ENCODE measurements at regions of chr5 and their contacts with region 1.

Region 1: DNA sequence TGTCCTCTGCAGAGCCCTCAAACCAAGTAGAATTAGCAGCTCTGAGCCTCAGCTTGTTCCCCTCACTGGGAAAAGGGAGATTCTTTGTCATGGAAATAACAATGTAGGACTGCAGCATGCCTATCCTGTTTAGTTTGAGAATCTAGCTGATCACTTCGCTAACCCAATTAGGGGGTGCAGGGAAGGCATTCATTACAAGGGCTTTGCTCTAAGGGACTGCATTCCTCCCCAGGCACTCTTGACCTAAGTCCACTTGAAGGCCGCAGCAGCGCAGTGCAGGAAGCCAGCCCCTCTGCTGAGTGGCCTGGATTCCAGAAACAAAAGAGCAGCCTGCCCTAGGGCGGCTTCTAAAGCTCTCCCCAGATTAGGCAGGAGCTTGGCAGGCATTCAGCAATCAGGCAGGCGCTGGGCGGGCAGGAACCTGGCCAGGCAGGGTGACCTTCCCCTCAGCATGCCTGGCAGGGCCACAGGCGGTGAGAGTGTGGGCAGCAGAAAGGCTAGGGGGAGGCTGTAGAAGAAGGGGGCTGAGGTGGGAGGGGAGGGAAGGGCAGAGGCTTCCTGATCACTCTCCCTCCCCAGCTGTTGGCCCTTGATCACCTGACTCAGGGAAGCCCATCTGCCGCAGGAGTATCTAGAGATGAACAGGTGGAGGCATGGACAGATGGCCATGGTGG is 24.8 kb downstream of the CCNJL start:
- DNase-seq: peak; percentile 84 to 94
- H3K4me3 ChIP-seq: no peak overlapping the region
- H3K27ac ChIP-seq: peak overlapping the region; percentile 38
- H3K4me1 ChIP-seq: peaks cover 28% of the 10 kb centered on the region
- H3K27me3 ChIP-seq: no peaks in the 10 kb centered on the region
- CTCF ChIP-seq: no peak

Region 2: DNA sequence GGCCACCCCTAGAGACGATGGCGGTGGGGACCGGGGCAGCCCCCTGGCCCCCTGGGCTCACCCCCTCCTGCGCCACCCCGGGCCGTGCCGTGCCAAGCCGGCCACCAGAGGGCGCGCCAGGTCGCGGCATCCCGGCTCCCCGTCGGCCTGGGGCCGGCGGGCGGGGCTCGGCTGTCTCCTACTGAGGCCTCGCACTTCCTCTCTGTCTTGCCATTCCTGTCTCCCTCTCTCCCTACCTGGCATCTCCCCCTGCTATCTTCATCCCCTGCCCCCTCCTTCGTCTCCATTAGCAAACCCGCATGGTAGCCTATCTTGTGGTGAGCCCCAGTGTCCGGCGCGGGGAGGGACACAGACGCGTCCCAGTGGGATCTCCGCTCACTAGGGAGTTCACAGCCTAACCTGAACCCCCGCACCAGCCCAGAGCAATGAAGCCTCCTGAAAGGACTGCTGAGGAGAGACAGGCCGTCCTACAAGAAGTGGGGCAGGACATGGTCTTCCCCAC is 88.1 kb before region 1 on chr5:
- CTCF ChIA-PET with region 1: no interaction called
- POLR2A ChIA-PET with region 1: no interaction called
- intact Hi-C with region 1: loop called (anchors 2 kb)
- DNase-seq: peak in 1 of 2 experiments; percentile 84
- H3K4me3 ChIP-seq: peak overlapping the region; percentile 35; the same call in 1 of the 2 replicates
- H3K27ac ChIP-seq: no peak overlapping the region
- H3K4me1 ChIP-seq: no peaks in the 10 kb centered on the region
- H3K27me3 ChIP-seq: no peaks in the 10 kb centered on the region
- CTCF ChIP-seq: peak; percentile 85

Region 3: DNA sequence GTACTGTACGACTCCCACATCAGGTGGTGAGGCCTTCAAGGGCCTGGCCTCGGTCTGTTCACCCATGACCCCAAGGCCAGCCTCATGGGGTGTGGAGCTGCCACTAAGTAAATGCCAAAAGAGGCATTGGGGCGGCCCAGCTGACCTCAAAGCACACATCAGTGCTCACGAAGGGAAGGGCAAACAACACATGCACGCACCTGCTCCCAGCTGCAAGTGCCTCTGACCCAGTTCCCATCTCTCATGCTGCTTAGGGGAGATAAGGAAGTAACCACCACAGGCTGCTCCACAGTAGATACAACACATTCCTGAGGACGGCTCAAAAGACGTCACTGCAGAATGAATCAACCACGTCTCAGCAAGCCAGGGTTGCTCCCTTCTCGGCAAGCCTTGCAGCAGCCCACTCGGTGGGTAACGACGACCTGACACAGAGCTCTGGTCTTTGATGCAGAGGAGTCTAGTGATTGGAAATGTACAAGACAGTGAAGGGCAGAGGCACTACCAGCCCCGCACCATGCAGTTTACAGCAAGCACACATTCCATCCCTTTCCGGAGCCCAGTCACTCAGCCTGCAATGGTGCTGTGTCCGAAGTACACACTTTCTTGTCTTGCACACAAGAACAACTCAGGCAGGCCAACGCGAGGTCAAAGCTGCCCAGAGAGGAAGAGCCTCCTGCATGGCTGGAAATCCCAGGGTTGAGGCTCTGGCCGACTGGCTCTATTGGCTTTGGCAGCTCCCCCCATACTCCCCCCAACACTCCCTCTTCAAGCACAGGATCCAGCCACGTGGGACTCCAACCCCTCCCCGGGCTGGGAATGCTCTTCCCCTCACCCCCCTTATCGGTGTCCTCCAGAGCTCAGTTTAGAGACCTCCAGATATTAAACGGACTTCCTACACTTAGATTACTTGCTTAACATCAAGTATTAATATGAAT is 26.4 kb before region 1 on chr5:
- CTCF ChIA-PET with region 1: no interaction called
- POLR2A ChIA-PET with region 1: no interaction called
- intact Hi-C with region 1: loop called (anchors 1 kb)
- DNase-seq: peak; percentile 84 to 99
- H3K4me3 ChIP-seq: no peak overlapping the region
- H3K27ac ChIP-seq: peak overlapping the region; percentile 79
- H3K4me1 ChIP-seq: peaks cover 18% of the 10 kb centered on the region
- H3K27me3 ChIP-seq: no peaks in the 10 kb centered on the region
- CTCF ChIP-seq: no peak

Region 4: GRCh38 chr5:160269017-160269416 is 18.5 kb before region 1 on chr5:
- CTCF ChIA-PET with region 1: interaction called, 5 read pairs
- POLR2A ChIA-PET with region 1: no interaction called
- intact Hi-C with region 1: loop called (anchors 2 kb)
- DNase-seq: peak; percentile 52 to 64
- H3K4me3 ChIP-seq: no peak overlapping the region
- H3K27ac ChIP-seq: no peak overlapping the region
- H3K4me1 ChIP-seq: peaks cover 11% of the 10 kb centered on the region
- H3K27me3 ChIP-seq: no peaks in the 10 kb centered on the region
- CTCF ChIP-seq: no peak

Region 5: GRCh38 chr5:160303690-160304089 is 16.2 kb after region 1 on chr5:
- CTCF ChIA-PET with region 1: interaction called, 3 read pairs
- POLR2A ChIA-PET with region 1: no interaction called
- intact Hi-C with region 1: loop called (anchors 1 kb)
- DNase-seq: no peak
- H3K4me3 ChIP-seq: no peak overlapping the region
- H3K27ac ChIP-seq: no peak overlapping the region
- H3K4me1 ChIP-seq: no peaks in the 10 kb centered on the region
- H3K27me3 ChIP-seq: no peaks in the 10 kb centered on the region
- CTCF ChIP-seq: no peak

Region 6: DNA sequence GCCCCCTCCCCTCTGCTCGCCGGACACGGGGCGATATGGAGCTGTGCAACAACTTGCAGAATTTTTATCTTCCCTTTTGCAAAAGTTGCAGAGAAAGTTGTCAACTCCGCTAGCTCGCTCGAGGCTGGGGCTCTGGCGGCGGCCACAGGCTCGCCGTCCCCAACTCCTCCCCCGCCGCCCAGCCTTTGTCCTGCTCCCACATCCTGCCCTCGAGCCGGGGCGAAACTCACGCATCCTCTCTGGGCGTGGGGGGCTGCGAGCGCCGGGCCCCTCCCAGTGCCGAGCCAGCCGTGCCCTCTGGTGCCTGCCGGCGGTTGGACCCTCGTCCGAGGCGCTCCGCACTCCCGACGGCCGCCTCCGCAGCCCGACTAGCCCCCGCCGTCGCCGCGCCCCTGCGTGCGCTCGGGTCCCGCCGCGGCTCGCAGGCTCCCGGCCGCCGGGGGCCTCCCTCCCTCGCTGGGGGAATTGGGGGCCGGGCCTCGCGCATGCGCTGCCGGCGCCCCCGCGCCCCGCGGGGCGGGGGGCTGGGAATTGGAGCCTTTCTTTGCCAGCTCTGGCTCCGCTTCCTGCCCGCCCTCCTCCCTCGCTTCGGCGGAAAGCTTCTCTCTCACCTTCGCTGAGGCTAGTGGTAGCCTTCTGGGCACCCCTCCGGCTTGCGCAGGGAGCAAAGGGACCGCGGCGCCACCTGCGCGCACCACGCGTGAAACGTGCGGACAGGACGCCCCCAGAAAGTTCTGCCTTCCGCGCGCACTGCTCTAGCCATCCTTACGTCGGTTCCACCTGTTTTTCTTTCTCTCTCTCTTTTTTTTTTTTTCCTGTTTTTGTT is 24.8 kb after region 1 on chr5 and contains the start of gene CCNJL:
- CTCF ChIA-PET with region 1: no interaction called
- POLR2A ChIA-PET with region 1: interaction called, 7 read pairs
- intact Hi-C with region 1: loop called (anchors 1 kb)
- DNase-seq: peak; percentile 47 to 91
- H3K4me3 ChIP-seq: peak within 1 kb of the TSS; percentile 78
- H3K27ac ChIP-seq: peak within 1 kb of the TSS; percentile 60
- H3K4me1 ChIP-seq: peaks cover 46% of the 10 kb centered on the region
- H3K27me3 ChIP-seq: no peaks in the 10 kb centered on the region
- CTCF ChIP-seq: no peak
- total RNA-seq, gene CCNJL: 33.9 and 34.7 TPM in 2 replicates